ENCODE measurements at regions of chr1 and their contacts with region 1.

Region 1: DNA sequence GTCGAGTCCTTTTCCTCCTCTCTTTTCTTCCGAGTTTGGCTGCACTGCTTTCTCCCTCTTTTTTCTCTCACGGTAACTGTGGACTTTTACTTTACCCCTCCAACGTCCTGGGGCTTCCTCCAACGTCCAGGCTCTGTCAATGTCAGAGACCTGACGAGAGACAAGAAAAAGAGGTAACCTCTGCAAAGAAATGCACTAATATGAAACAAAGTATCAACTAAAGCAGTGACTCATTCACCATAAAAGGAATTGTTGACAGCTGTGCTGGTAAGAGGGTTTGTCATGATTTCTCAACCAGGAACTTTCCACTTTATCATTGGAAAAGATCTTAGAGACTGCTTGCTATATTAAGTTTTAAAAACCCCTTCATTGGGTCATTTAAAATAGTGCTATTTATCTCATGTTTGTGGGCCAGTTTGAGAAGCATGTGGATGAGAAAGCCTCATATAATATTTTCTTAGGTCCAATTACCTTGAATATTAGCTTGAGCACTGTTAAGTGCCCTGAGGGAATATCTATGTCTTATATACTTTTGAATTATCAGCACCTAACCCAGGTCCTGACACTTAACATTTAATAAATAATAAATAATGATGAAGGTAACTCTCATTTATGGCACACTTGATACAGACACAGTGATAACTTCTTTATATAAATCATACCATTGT is at the start of gene GBP2:
- DNase-seq: peak; percentile 34 to 54 (median 43)
- H3K4me3 ChIP-seq: peak within 1 kb of the TSS; percentile 75 to 83
- H3K4me3 Mint-ChIP-seq: peak within 1 kb of the TSS; percentile 97 to 100 (median 100)
- H3K27ac ChIP-seq: peak within 1 kb of the TSS; percentile 80
- H3K27ac Mint-ChIP-seq: peak within 1 kb of the TSS; percentile 93 to 100 (median 99)
- H3K4me1 ChIP-seq: peaks cover 52% of the 10 kb centered on the region
- H3K4me1 Mint-ChIP-seq: peaks cover 40 to 77% (median 55%) of the 10 kb centered on the region in 4 donors
- H3K27me3 ChIP-seq: no peaks in the 10 kb centered on the region
- H3K27me3 Mint-ChIP-seq: no peaks in the 10 kb centered on the region
- total RNA-seq, gene GBP2: 186 to 199 TPM

Region 2: DNA sequence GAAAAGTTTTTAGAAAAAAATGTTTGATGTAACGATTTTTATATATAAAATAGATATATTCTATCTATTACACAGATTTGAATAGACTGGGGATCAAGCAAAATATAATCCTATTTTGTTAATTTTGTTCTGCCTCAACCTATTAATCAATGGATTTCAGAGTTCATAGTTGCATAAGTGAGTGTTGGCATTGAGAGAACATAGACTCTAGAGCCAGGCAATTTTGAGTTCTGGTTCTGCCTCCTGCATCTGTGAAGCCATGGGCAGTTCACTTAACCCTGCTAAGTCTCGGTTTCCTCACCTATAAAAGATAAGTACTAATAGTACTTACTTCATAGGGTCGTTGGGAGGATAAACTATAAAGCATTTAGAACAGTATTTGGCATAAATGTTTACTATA is 455.6 kb before region 1 on chr1:
- CTCF ChIA-PET with region 1: no interaction called
- POLR2A ChIA-PET with region 1: no interaction called
- intact Hi-C with region 1: no loop called
- DNase-seq: no peak
- H3K4me3 ChIP-seq: no peak overlapping the region
- H3K4me3 Mint-ChIP-seq: no peak overlapping the region
- H3K27ac ChIP-seq: no peak overlapping the region
- H3K27ac Mint-ChIP-seq: no peak overlapping the region
- H3K4me1 ChIP-seq: no peaks in the 10 kb centered on the region
- H3K4me1 Mint-ChIP-seq: no peaks in the 10 kb centered on the region
- H3K27me3 ChIP-seq: peaks cover 4% of the 10 kb centered on the region
- H3K27me3 Mint-ChIP-seq: peaks cover 18 to 22% of the 10 kb centered on the region in 2 donors

Region 3: DNA sequence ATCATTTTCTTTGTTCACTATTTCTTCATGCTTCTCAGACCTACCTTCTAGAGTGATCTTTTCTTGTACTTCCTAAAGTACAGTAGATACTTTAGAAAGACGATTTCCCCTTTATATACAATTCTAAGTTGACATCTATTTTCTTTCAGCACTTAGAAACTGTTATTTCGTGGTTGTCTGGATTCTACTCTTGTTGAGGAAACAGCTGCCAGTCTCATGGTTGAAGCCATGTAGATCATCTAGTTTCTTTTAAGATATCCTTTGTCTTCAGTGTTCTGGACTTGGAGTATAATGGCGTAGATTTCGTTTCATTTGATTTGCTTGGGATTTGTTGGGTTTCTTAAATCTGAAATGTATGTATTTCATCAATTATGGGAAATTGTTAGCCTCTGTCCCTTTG is 374.3 kb before region 1 on chr1:
- CTCF ChIA-PET with region 1: no interaction called
- POLR2A ChIA-PET with region 1: no interaction called
- intact Hi-C with region 1: no loop called
- DNase-seq: no peak
- H3K4me3 ChIP-seq: no peak overlapping the region
- H3K4me3 Mint-ChIP-seq: no peak overlapping the region
- H3K27ac ChIP-seq: no peak overlapping the region
- H3K27ac Mint-ChIP-seq: no peak overlapping the region
- H3K4me1 ChIP-seq: no peaks in the 10 kb centered on the region
- H3K4me1 Mint-ChIP-seq: peaks cover 0 to 8% (median 4%) of the 10 kb centered on the region in 4 donors
- H3K27me3 ChIP-seq: no peaks in the 10 kb centered on the region
- H3K27me3 Mint-ChIP-seq: no peaks in the 10 kb centered on the region

Region 4: DNA sequence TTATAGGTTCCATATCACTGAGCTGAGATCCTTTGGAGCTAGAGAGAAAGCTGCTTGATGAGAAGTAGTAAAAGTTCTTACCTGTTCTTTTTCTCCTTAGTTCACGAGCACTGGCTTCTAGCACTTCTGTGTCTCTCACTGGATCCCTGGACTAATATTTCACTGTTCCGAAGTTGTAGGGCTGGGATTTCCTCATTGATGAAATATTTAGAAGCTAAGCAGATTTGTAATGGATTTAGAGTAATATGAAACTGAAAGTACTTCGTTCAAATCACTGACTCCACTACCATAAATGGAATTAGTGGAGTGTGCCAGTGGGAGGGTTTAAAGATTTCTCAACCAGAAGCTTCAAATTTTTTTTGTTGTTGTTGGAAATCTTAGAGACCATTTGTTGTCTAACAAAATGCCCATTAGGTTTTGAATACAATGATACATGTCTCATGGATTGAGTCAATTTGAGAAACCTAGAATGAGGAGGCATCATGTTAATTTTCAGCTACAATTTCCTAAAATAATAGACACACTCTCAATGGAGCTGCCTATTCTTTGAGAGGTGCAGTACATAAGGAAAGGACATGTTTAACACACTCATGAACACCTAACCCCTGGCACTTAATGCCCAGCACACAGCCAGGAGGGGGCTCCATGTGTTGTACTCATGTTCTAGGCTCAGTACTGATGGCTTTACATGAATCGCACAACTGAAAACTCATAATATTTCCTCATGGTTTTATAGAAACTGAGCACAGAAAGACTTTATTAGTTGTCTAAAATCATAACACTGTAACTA is 60.8 kb before region 1 on chr1 and contains the start of gene GBP1:
- CTCF ChIA-PET with region 1: interaction called, 6 read pairs
- POLR2A ChIA-PET with region 1: interaction called, 42 read pairs
- intact Hi-C with region 1: loop called (anchors 2 kb)
- DNase-seq: peak; percentile 51 to 57 (median 53)
- H3K4me3 ChIP-seq: peak within 1 kb of the TSS; percentile 65 to 74
- H3K4me3 Mint-ChIP-seq: peak within 1 kb of the TSS; percentile 90 to 100 (median 98)
- H3K27ac ChIP-seq: peak within 1 kb of the TSS; percentile 85
- H3K27ac Mint-ChIP-seq: peak within 1 kb of the TSS; percentile 94 to 100 (median 96)
- H3K4me1 ChIP-seq: peaks cover 56% of the 10 kb centered on the region
- H3K4me1 Mint-ChIP-seq: peaks cover 37 to 70% (median 51%) of the 10 kb centered on the region in 4 donors
- H3K27me3 ChIP-seq: no peaks in the 10 kb centered on the region
- H3K27me3 Mint-ChIP-seq: no peaks in the 10 kb centered on the region
- total RNA-seq, gene GBP1: 74.1 to 74.2 TPM

Region 5: GRCh38 chr1:89112871-89113613 is 13.0 kb before region 1 on chr1:
- CTCF ChIA-PET with region 1: interaction called, 4 read pairs
- POLR2A ChIA-PET with region 1: interaction called, 24 read pairs
- intact Hi-C with region 1: loop called (anchors 2 kb)
- DNase-seq: no peak
- H3K4me3 ChIP-seq: no peak overlapping the region
- H3K4me3 Mint-ChIP-seq: no peak overlapping the region
- H3K27ac ChIP-seq: no peak overlapping the region
- H3K27ac Mint-ChIP-seq: peak overlapping the region in 6 of 7 donors; percentile 6 to 70 (median 39)
- H3K4me1 ChIP-seq: peaks cover 8% of the 10 kb centered on the region
- H3K4me1 Mint-ChIP-seq: peaks cover 26 to 43% (median 33%) of the 10 kb centered on the region in 4 donors
- H3K27me3 ChIP-seq: no peaks in the 10 kb centered on the region
- H3K27me3 Mint-ChIP-seq: no peaks in the 10 kb centered on the region

Region 6: GRCh38 chr1:89198491-89199072 is 72.5 kb after region 1 on chr1 and contains the start of gene GBP4:
- CTCF ChIA-PET with region 1: interaction called, 13 read pairs
- POLR2A ChIA-PET with region 1: interaction called, 14 read pairs
- intact Hi-C with region 1: no loop called
- DNase-seq: peak; percentile 36 to 58 (median 45)
- H3K4me3 ChIP-seq: peak within 1 kb of the TSS; percentile 80
- H3K4me3 Mint-ChIP-seq: peak within 1 kb of the TSS; percentile 96 to 99 (median 98)
- H3K27ac ChIP-seq: peak within 1 kb of the TSS; percentile 85
- H3K27ac Mint-ChIP-seq: peak within 1 kb of the TSS; percentile 94 to 99 (median 95)
- H3K4me1 ChIP-seq: peaks cover 60% of the 10 kb centered on the region
- H3K4me1 Mint-ChIP-seq: peaks cover 48 to 88% (median 63%) of the 10 kb centered on the region in 4 donors
- H3K27me3 ChIP-seq: no peaks in the 10 kb centered on the region
- H3K27me3 Mint-ChIP-seq: no peaks in the 10 kb centered on the region
- total RNA-seq, gene GBP4: 48.5 to 49.5 TPM

Region 7: GRCh38 chr1:89310505-89310904 is 184.5 kb after region 1 on chr1:
- CTCF ChIA-PET with region 1: interaction called, 3 read pairs
- POLR2A ChIA-PET with region 1: interaction called, 17 read pairs
- intact Hi-C with region 1: no loop called
- DNase-seq: peak in 3 of 5 donors; percentile 17 to 27 (median 18)
- H3K4me3 ChIP-seq: peak overlapping the region in 1 of 2 donors; percentile 7
- H3K4me3 Mint-ChIP-seq: peak overlapping the region; percentile 37 to 84 (median 70)
- H3K27ac ChIP-seq: no peak overlapping the region
- H3K27ac Mint-ChIP-seq: peak overlapping the region; percentile 62 to 94 (median 81)
- H3K4me1 ChIP-seq: peaks cover 62% of the 10 kb centered on the region
- H3K4me1 Mint-ChIP-seq: peaks cover 30 to 66% (median 47%) of the 10 kb centered on the region in 4 donors
- H3K27me3 ChIP-seq: no peaks in the 10 kb centered on the region
- H3K27me3 Mint-ChIP-seq: no peaks in the 10 kb centered on the region

Measured in CD4-positive, alpha-beta memory T cell (primary cell).